Activated T-helper 1 cell treated with anti-CD3 and anti-CD28 coated beads, Interleukin-12 subunit alpha, Interleukin-12 subunit beta, Interleukin-2, Interleukin-4 antibody, amounts not matched to agents 30 ng/mL and 10 ng/mL and 1 ng/mL, durations not matched to agents 14 hours and 24 hours and 36 hours (primary cell): ENCODE measurements at regions of chr12 and their contacts with region 1.

Region 1: GRCh38 chr12:43733687-43734086 is 24.9 kb downstream of the PUS7L start:
- DNase-seq: no peak
- H3K4me3 Mint-ChIP-seq: no peak overlapping the region
- H3K27ac Mint-ChIP-seq: no peak overlapping the region
- H3K4me1 Mint-ChIP-seq: peaks cover 8% of the 10 kb centered on the region
- H3K27me3 Mint-ChIP-seq: no peaks in the 10 kb centered on the region

Region 2: GRCh38 chr12:43444940-43445564 is 288.6 kb before region 1 on chr12:
- intact Hi-C with region 1: loop called (anchors 5 kb)
- DNase-seq: no peak
- H3K4me3 Mint-ChIP-seq: no peak overlapping the region
- H3K27ac Mint-ChIP-seq: no peak overlapping the region
- H3K4me1 Mint-ChIP-seq: no peaks in the 10 kb centered on the region
- H3K27me3 Mint-ChIP-seq: no peaks in the 10 kb centered on the region